OCI-LY7 (cell line): ENCODE measurements at regions of chr16 and their contacts with region 1.

Region 1: DNA sequence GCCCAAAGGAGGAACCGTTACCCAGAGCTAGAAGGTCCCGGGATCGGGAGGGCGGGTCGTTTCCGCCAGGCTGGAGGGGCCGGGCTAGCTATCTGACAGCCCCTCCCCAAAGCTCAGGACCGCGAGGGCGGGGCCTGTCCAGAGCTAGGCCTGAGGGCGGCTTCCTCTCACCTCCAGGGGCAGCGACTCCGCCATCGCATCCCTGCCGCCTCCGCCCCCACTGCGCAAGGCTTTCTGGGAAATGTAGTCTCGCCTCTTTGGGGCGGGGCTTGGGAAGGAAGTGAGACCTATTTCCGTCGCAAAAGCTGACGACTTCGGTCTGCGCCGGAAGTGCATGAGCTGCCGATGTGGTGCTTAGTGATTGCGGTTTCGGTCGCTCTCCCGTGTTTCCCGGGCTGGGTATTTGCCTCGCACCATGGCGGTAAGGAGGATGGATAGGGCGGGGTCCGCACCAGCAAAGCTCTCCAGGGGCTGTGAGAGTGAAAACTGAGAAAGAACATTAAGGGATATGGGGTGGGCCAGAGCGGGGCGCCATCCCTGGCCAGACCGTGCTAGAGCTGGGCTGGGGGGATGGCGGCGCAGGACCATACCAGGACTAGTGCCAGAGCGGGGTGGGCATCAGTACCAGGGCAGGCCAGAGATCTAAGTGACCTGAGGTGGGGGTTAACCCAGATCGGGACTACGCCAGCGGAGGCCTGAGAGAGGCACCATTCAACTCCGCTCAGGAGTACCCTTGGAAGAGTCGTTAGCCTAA is at the start of gene TMEM208:
- DNase-seq: peak; percentile 98
- H3K4me3 ChIP-seq: peak within 1 kb of the TSS; percentile 95
- H3K27ac ChIP-seq: peak within 1 kb of the TSS; percentile 19
- H3K4me1 ChIP-seq: peaks cover 18% of the 10 kb centered on the region
- CTCF ChIP-seq: peak; percentile 71
- total RNA-seq, gene TMEM208: 19.9 and 36.7 TPM in 2 replicates

Region 2: GRCh38 chr16:67191995-67192681 is 34.8 kb before region 1 on chr16 and contains the start of gene E2F4:
- CTCF ChIA-PET with region 1: interaction called, 3 read pairs
- POLR2A ChIA-PET with region 1: interaction called, 12 read pairs
- intact Hi-C with region 1: loop called (anchors 2 kb)
- DNase-seq: peak; percentile 96
- H3K4me3 ChIP-seq: peak within 1 kb of the TSS; percentile 98
- H3K27ac ChIP-seq: peak within 1 kb of the TSS; percentile 45
- H3K4me1 ChIP-seq: peaks cover 19% of the 10 kb centered on the region
- CTCF ChIP-seq: no peak
- total RNA-seq, gene E2F4: 139 and 157 TPM in 2 replicates

Region 3: GRCh38 chr16:67198238-67198734 is 28.7 kb before region 1 on chr16:
- CTCF ChIA-PET with region 1: no interaction called
- POLR2A ChIA-PET with region 1: interaction called, 12 read pairs
- intact Hi-C with region 1: loop called (anchors 2 kb)
- DNase-seq: peak; percentile 35
- H3K4me3 ChIP-seq: no peak overlapping the region
- H3K27ac ChIP-seq: no peak overlapping the region
- H3K4me1 ChIP-seq: peaks cover 9% of the 10 kb centered on the region
- CTCF ChIP-seq: peak; percentile 82

Region 4: DNA sequence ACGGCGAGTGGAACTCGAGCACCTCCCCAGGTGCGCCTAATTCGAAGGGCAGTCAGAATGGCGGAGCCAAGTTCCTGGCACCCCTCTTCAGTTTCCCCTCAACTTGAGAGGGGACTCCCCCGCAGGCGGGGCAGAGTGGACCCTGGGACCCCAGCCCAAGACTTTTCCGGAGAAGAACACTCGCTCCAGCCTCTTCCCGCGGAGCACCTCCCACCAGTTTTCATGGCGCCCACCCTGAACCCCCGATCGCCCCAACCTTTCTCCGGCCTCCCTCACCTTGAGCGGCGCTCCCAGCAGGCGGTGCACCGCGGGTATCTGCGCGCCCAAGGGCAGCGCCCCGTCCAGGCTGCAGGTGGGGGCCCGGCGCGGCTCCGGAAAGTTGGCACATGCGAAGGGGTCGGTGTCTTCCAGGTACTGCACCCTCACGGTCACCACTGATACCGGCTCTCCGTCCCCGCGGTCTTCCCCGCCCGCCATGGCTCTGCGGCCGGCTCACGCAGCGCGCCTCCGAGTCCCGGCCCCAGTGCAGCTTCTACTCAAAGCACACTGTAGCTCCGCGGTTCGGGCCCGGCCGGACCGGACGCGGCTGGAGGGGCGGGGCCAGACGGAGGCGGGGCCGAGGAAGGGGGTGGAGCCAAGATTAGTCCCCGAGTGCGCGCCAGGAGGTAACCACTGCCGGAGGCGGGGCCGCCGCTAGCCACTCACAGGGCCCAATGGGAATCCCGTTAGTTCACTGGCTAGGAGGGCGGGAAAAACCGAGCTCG is 20.1 kb after region 1 on chr16 and contains the start of gene FHOD1:
- CTCF ChIA-PET with region 1: interaction called, 6 read pairs
- POLR2A ChIA-PET with region 1: interaction called, 11 read pairs
- intact Hi-C with region 1: loop called (anchors 1 kb)
- DNase-seq: peak; percentile 98
- H3K4me3 ChIP-seq: peak within 1 kb of the TSS; percentile 86
- H3K27ac ChIP-seq: peak within 1 kb of the TSS; percentile 70
- H3K4me1 ChIP-seq: peaks cover 50% of the 10 kb centered on the region
- CTCF ChIP-seq: 0 out of 2 replicates have a peak, but pooled peaks have one; percentile 8
- total RNA-seq, gene FHOD1: 16.0 and 16.5 TPM in 2 replicates